ENCODE measurements at regions of chr10 and their contacts with region 1.

Region 1: GRCh38 chr10:100009793-100010676 is at the start of gene DNMBP:
- DNase-seq: peak; percentile 95
- H3K4me3 Mint-ChIP-seq: peak within 1 kb of the TSS; percentile 89
- H3K27ac Mint-ChIP-seq: peak within 1 kb of the TSS; percentile 78
- H3K4me1 Mint-ChIP-seq: peaks cover 37% of the 10 kb centered on the region
- H3K27me3 Mint-ChIP-seq: peaks cover 31% of the 10 kb centered on the region
- total RNA-seq, gene DNMBP: 1.3 TPM in 2 replicates

Region 2: DNA sequence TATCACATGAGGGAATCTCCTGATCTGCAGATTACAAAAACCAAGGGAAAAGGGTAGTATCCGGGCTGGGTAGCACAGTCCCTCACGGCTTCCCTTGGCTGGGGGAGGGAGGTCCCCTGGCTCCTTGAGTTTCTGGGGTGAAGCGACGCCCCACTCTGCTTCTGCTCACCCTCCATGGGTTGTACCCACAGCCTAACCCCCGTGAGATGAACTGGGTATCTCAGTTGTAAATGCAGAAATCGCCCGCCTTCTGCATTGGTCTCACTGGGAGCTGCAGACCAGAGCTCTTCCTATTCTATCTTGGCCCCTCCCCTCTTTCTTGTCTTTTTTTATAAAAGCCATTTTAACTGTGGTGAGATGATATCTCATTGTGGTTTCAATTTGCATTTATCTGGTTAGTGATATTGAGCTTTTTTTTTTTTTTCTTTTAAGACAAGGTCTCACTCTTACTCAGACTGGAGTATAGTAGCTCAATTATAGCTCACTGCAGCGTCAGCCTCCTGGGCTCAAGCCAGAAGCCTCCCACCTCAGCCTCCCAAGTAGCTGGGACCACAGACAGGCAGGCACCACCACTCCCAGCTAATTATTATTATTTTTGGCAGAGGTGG is 139.8 kb before region 1 on chr10:
- intact Hi-C with region 1: loop called (anchors 1 kb)
- DNase-seq: peak; percentile 75
- H3K4me3 Mint-ChIP-seq: peak overlapping the region; percentile 61
- H3K27ac Mint-ChIP-seq: peak overlapping the region; percentile 71
- H3K4me1 Mint-ChIP-seq: peaks cover 11% of the 10 kb centered on the region
- H3K27me3 Mint-ChIP-seq: peaks cover 81% of the 10 kb centered on the region